CD8-positive, alpha-beta T cell (primary cell): ENCODE measurements at regions of chr10 and their contacts with region 1.

Region 1: GRCh38 chr10:117174439-117175214 is 22.7 kb upstream of the KCNK18 start:
- DNase-seq: peak; percentile 67 to 88 (median 82)
- ATAC-seq: peak; percentile 88
- H3K4me3 ChIP-seq: peak overlapping the region; percentile 53 to 60
- H3K4me3 Mint-ChIP-seq: peak overlapping the region; percentile 92
- H3K27ac ChIP-seq: no peak overlapping the region
- H3K27ac Mint-ChIP-seq: no peak overlapping the region
- H3K4me1 ChIP-seq: peaks cover 6% of the 10 kb centered on the region
- H3K4me1 Mint-ChIP-seq: peaks cover 18% of the 10 kb centered on the region
- H3K27me3 ChIP-seq: peaks cover 0 to 7% of the 10 kb centered on the region in 2 experiments
- H3K27me3 Mint-ChIP-seq: peaks cover 29% of the 10 kb centered on the region
- CTCF ChIP-seq: peak; percentile 72

Region 2: GRCh38 chr10:116444527-116445142 is 730.0 kb before region 1 on chr10:
- CTCF ChIA-PET with region 1: no interaction called
- POLR2A ChIA-PET with region 1: no interaction called
- intact Hi-C with region 1: loop called in 1 of 2 experiments (anchors 5 kb)
- DNase-seq: peak in 2 of 9 experiments; percentile 8 to 28
- ATAC-seq: no peak
- H3K4me3 ChIP-seq: no peak overlapping the region
- H3K4me3 Mint-ChIP-seq: no peak overlapping the region
- H3K27ac ChIP-seq: no peak overlapping the region
- H3K27ac Mint-ChIP-seq: no peak overlapping the region
- H3K4me1 ChIP-seq: no peaks in the 10 kb centered on the region
- H3K4me1 Mint-ChIP-seq: no peaks in the 10 kb centered on the region
- H3K27me3 ChIP-seq: no peaks in the 10 kb centered on the region
- H3K27me3 Mint-ChIP-seq: peaks cover 2% of the 10 kb centered on the region
- CTCF ChIP-seq: peak; percentile 58

Region 3: GRCh38 chr10:116787893-116788665 is 386.5 kb before region 1 on chr10:
- CTCF ChIA-PET with region 1: interaction called, 29 read pairs
- POLR2A ChIA-PET with region 1: no interaction called
- intact Hi-C with region 1: loop called in 1 of 2 experiments (anchors 1 kb)
- DNase-seq: peak; percentile 50 to 87 (median 77)
- ATAC-seq: peak; percentile 90
- H3K4me3 ChIP-seq: no peak overlapping the region
- H3K4me3 Mint-ChIP-seq: peak overlapping the region; percentile 69
- H3K27ac ChIP-seq: no peak overlapping the region
- H3K27ac Mint-ChIP-seq: peak overlapping the region; percentile 75
- H3K4me1 ChIP-seq: peaks cover 5% of the 10 kb centered on the region
- H3K4me1 Mint-ChIP-seq: peaks cover 14% of the 10 kb centered on the region
- H3K27me3 ChIP-seq: no peaks in the 10 kb centered on the region
- H3K27me3 Mint-ChIP-seq: peaks cover 25% of the 10 kb centered on the region
- CTCF ChIP-seq: peak; percentile 99

Region 4: GRCh38 chr10:116809483-116810119 is 365.0 kb before region 1 on chr10:
- CTCF ChIA-PET with region 1: interaction called, 11 read pairs
- POLR2A ChIA-PET with region 1: no interaction called
- intact Hi-C with region 1: no loop called
- DNase-seq: no peak
- ATAC-seq: no peak
- H3K4me3 ChIP-seq: no peak overlapping the region
- H3K4me3 Mint-ChIP-seq: no peak overlapping the region
- H3K27ac ChIP-seq: no peak overlapping the region
- H3K27ac Mint-ChIP-seq: no peak overlapping the region
- H3K4me1 ChIP-seq: no peaks in the 10 kb centered on the region
- H3K4me1 Mint-ChIP-seq: no peaks in the 10 kb centered on the region
- H3K27me3 ChIP-seq: no peaks in the 10 kb centered on the region
- H3K27me3 Mint-ChIP-seq: peaks cover 14% of the 10 kb centered on the region
- CTCF ChIP-seq: no peak

Region 5: DNA sequence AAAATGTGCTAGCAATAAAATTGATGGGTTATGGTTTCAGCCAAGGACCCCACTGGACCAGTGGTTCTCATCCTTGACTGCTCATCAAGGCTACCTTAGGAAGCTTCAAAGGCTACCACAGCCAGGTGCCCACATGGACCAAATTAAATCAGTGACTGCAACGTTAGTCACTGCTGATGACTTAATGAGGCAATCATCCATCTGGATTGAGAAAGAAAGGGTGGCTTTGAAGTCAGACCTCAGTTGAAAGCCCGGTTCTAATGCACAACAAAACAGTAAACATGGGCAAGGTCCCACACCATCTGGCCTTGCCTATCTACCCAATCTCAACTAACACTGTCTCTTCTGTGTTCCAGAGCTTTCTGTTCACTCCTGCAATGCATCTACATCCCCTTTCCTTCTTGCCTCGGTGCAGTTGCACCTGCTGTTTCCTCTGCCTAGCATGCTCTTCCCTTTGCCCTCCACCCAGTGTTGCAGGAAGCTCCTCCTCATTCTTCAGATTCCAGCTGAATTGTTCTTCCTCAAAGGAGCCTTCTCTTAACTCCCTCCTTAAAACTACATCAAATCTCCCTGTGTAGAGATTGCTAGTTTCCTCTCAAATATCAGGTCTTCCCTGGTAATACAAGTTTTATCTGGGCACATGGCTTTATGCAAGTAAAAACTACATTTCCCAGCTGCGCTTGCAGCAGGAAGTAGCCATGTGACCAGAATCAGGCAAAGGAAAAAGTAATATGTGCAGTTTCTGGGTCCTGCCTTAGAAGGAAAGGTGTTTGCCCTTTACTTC is 12.4 kb after region 1 on chr10:
- CTCF ChIA-PET with region 1: interaction called, 16 read pairs
- POLR2A ChIA-PET with region 1: no interaction called
- intact Hi-C with region 1: no loop called
- DNase-seq: peak in 1 of 9 experiments; percentile 22
- ATAC-seq: no peak
- H3K4me3 ChIP-seq: no peak overlapping the region
- H3K4me3 Mint-ChIP-seq: no peak overlapping the region
- H3K27ac ChIP-seq: no peak overlapping the region
- H3K27ac Mint-ChIP-seq: no peak overlapping the region
- H3K4me1 ChIP-seq: no peaks in the 10 kb centered on the region
- H3K4me1 Mint-ChIP-seq: no peaks in the 10 kb centered on the region
- H3K27me3 ChIP-seq: peaks cover 0 to 6% of the 10 kb centered on the region in 2 experiments
- H3K27me3 Mint-ChIP-seq: peaks cover 5% of the 10 kb centered on the region
- CTCF ChIP-seq: no peak

Region 6: DNA sequence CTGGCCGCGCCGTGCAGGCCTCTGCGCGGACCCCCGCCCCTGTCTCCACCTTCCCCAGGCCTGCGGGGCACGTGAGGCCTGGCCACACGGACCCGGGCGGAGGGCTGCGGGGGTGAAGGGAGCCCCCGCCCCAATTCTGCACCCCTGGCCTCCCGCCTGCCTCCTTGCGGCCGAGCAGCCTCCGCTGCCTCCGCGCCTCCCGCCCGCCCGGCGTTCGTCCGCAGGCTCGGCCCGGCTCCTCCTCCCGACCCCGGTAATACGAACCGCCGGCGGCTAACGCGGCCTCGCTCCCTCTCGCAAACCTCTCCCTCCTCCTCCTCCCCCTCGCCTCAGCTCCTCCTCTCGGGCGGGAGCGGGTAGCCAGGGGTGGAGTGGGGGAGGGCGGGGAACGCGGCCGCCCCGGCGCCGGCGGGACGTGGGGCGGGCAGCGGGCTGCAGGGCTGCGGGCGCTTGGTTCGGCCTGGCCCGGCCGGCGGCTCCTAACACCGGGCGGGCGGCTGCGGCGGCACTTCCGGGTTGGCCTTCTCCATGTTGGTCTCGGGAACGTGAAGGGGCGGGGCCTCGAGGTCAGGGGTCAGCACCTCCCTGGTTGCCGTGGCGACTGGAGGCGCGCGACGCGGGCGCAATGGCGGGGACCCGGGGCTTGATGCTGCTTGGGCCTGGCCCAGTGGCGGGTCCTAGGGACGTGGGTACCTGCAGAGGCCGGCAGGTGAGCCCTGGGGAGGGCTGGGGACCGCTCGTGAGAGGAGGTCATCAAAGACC is 871.9 kb after region 1 on chr10 and contains the start of gene RAB11FIP2:
- CTCF ChIA-PET with region 1: no interaction called
- POLR2A ChIA-PET with region 1: no interaction called
- intact Hi-C with region 1: loop called in 1 of 2 experiments (anchors 10 kb)
- DNase-seq: peak; percentile 93 to 98 (median 96)
- ATAC-seq: peak; percentile 94
- H3K4me3 ChIP-seq: peak within 1 kb of the TSS; percentile 54 to 75
- H3K4me3 Mint-ChIP-seq: peak within 1 kb of the TSS; percentile 89
- H3K27ac ChIP-seq: peak within 1 kb of the TSS; percentile 44 to 70
- H3K27ac Mint-ChIP-seq: peak within 1 kb of the TSS; percentile 89
- H3K4me1 ChIP-seq: peaks cover 18% of the 10 kb centered on the region
- H3K4me1 Mint-ChIP-seq: peaks cover 45% of the 10 kb centered on the region
- H3K27me3 ChIP-seq: no peaks in the 10 kb centered on the region
- H3K27me3 Mint-ChIP-seq: no peaks in the 10 kb centered on the region
- CTCF ChIP-seq: no peak
- total RNA-seq, gene RAB11FIP2: 32.6 to 34.2 TPM